ENCODE measurements at regions of chr18 and their contacts with region 1.

Region 1: DNA sequence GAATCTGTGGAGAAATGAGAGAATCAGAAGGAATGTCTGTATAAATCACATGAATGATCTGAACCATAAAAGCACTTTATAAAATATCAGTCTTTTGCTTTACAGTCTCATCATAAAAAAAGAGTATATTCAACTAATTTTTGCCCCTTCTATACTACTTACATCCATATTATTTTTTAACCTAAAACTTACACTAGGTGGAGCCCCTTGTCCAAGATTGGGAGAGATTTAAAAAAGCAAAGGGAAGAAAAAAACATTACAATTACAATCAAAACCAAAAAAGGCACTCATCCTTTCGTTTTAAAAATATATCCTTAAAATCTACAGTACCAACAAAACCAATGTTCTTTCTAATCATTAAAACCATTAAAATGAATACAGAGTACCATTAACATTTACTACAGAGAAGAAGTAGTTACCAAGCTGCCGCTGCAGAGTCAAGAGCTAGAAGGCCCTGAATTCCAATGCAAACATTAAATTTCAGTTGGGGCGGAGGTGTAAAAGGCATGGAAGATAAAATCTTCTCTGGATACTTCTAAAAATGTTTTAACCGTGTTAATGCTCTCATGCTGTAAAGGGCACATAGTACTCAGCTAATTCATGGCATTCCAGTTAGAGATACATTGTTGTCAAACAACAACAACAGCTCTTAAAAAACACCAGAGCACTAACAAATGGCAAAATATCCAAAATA is 56.7 kb upstream of the EPB41L3 start:
- DNase-seq: peak in 2 of 4 donors; percentile 27 to 53
- ATAC-seq: peak; percentile 76
- H3K4me3 ChIP-seq: no peak overlapping the region
- H3K27ac ChIP-seq: no peak overlapping the region
- H3K4me1 ChIP-seq: no peaks in the 10 kb centered on the region
- H3K27me3 ChIP-seq: no peaks in the 10 kb centered on the region
- CTCF ChIP-seq: peak in 1 of 2 donors; percentile 35

Region 2: GRCh38 chr18:5534845-5535244 is 65.7 kb before region 1 on chr18:
- intact Hi-C with region 1: no loop called
- DNase-seq: no peak
- ATAC-seq: no peak
- H3K4me3 ChIP-seq: no peak overlapping the region
- H3K27ac ChIP-seq: no peak overlapping the region
- H3K4me1 ChIP-seq: no peaks in the 10 kb centered on the region
- H3K27me3 ChIP-seq: no peaks in the 10 kb centered on the region
- CTCF ChIP-seq: no peak

Region 3: GRCh38 chr18:5841518-5841917 is 241.0 kb after region 1 on chr18:
- intact Hi-C with region 1: loop called in 1 of 2 experiments (anchors 5 kb)
- DNase-seq: no peak
- ATAC-seq: no peak
- H3K4me3 ChIP-seq: no peak overlapping the region
- H3K27ac ChIP-seq: no peak overlapping the region
- H3K4me1 ChIP-seq: no peaks in the 10 kb centered on the region
- H3K27me3 ChIP-seq: no peaks in the 10 kb centered on the region
- CTCF ChIP-seq: no peak

Measured in left lung (tissue), 14 donors.